AG04450 (cell line): ENCODE measurements at regions of chr5 and their contacts with region 1.

Region 1: GRCh38 chr5:142128675-142129208 is 20.2 kb downstream of the NDFIP1 start:
- DNase-seq: no peak
- H3K4me3 ChIP-seq: no peak overlapping the region
- H3K27ac ChIP-seq: no peak overlapping the region
- H3K27me3 ChIP-seq: no peaks in the 10 kb centered on the region
- CTCF ChIP-seq: no peak

Region 2: DNA sequence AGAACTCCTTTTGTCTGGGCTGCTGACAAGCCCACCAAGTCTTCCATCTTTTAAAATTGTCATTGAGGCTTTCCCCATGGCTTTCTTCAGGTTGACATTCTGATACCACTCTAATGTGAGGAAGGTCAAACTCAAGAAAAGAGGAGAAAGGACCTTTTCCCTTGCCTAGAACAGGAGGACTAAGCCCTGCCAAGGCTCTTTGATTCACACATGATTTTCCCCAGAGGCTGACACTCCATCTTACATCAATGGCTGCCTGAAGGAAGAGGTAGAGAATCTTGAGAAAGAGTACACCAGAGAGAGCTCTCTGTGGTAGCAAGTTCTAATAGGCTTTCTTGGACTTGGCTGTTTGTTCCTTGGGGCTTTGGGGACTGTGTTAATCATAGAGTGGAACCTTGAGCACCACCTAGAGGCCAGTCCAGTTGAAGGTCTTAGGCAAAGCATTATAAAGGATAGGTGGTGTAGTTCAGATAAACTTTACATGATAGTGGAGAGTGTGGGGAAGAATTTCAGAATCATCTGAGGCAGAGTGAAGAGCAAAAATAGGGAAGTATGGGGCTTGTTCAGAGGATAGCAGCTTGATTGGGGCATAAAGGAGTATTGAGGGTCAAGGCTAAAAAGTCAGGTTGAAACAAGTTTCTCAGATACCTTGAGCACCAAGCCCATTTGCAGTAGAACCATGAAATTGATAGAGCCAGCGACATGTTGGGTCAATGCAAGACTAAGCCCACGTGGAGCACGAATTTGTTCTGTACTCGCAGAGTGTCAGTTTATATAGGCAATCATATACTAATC is 16.6 kb after region 1 on chr5:
- CTCF ChIA-PET with region 1: interaction called, 55 read pairs
- POLR2A ChIA-PET with region 1: no interaction called
- DNase-seq: peak; percentile 16
- H3K4me3 ChIP-seq: no peak overlapping the region
- H3K27ac ChIP-seq: no peak overlapping the region
- H3K27me3 ChIP-seq: no peaks in the 10 kb centered on the region
- CTCF ChIP-seq: peak; percentile 81